ENCODE measurements at regions of chr5 and their contacts with region 1.

Region 1: GRCh38 chr5:98865690-98866089 is 63.1 kb downstream of the CHD1 start:
- DNase-seq: no peak
- ATAC-seq: no peak
- H3K4me3 Mint-ChIP-seq: no peak overlapping the region
- H3K27ac Mint-ChIP-seq: no peak overlapping the region
- H3K4me1 Mint-ChIP-seq: peaks cover 2% of the 10 kb centered on the region
- H3K27me3 Mint-ChIP-seq: no peaks in the 10 kb centered on the region
- CTCF ChIP-seq: no peak

Region 2: GRCh38 chr5:98880151-98880550 is 14.5 kb after region 1 on chr5:
- CTCF ChIA-PET with region 1: no interaction called
- POLR2A ChIA-PET with region 1: no interaction called
- intact Hi-C with region 1: loop called (anchors 2 kb)
- DNase-seq: no peak
- ATAC-seq: no peak
- H3K4me3 Mint-ChIP-seq: no peak overlapping the region
- H3K27ac Mint-ChIP-seq: no peak overlapping the region
- H3K4me1 Mint-ChIP-seq: peaks cover 6% of the 10 kb centered on the region
- H3K27me3 Mint-ChIP-seq: no peaks in the 10 kb centered on the region
- CTCF ChIP-seq: no peak

Region 3: DNA sequence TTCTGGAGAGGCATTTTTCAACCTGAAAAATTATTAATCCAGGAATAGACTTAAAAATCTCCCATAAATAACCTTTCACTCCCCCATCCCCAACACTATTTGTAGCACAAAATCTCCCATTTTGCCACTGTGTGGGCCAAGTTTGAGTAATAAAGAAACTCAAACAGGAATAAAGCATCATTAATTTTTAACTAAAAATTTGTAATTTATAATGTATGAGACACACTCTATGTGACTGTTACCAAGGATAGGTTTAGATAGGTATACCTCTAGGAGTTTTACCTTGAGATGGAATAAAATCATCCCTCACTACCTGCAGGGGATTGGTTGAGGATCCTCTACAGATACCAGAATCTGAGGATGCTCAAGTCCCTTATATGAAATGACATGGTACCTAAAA is 33.1 kb after region 1 on chr5:
- CTCF ChIA-PET with region 1: no interaction called
- POLR2A ChIA-PET with region 1: interaction called, 3 read pairs
- intact Hi-C with region 1: loop called (anchors 5 kb)
- DNase-seq: no peak
- ATAC-seq: no peak
- H3K4me3 Mint-ChIP-seq: no peak overlapping the region
- H3K27ac Mint-ChIP-seq: no peak overlapping the region
- H3K4me1 Mint-ChIP-seq: no peaks in the 10 kb centered on the region
- H3K27me3 Mint-ChIP-seq: no peaks in the 10 kb centered on the region
- CTCF ChIP-seq: no peak

Measured in activated B cell treated with CpG ODN at 0.5 μM for 24 hours (primary cell).